Activated naive CD8-positive, alpha-beta T cell treated with anti-CD3 and anti-CD28 coated beads, Interleukin-2, amount 10 ng/mL, durations not matched to agents 7 days and 5 days (primary cell): ENCODE measurements at regions of chr22 and their contacts with region 1.

Region 1: DNA sequence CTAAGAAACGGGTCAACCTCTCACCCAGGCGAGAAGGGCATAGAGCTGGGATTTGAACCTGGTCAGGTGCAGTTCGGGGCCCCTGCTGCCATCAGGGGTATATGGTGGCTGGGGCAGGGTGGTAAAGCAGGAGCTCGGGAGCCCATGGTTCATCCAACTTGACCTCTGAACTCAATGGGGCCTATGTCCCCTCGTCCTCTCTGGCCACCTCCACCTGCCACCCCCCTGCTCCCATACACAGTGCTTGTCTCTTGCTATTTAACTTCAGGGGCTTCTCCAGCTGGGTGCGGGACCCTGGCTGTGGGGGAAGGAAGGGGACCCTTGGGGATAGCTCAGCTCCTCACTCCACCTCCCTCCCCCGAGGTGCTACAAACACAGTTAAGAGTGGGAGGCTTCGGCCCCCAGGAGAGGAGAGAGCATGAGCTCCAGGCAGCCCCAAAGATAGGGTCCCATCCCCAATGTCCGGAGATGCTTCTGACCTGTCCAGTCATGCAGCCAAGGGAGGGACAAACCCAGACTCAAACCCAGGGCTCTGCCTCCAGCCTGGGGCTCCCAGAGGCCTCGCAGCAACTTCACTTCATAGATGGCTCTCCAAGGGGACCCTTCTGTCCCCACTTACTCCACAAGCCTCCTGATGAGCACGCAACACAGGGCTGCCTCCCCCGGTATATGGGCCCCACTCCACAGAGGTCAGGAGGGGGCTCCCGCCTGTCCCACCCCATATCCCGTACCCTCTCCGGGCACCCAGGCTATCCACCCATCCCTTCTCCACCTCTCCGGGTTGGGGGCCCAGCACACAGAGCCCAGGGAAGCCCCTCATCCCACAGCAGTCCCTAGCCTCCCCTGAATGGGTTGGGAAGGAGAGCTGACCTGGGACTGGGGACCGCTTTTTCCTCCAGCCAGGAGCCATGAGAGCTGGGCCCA is 712 bp downstream of the IL2RB start:
- DNase-seq: no peak
- ATAC-seq: no peak
- H3K4me3 Mint-ChIP-seq: peak overlapping the region; percentile 95
- H3K27ac Mint-ChIP-seq: peak overlapping the region; percentile 95
- H3K4me1 Mint-ChIP-seq: peaks cover 48% of the 10 kb centered on the region
- H3K27me3 Mint-ChIP-seq: no peaks in the 10 kb centered on the region

Region 2: GRCh38 chr22:37077884-37078485 is 71.0 kb before region 1 on chr22:
- POLR2A ChIA-PET with region 1: interaction called, 57 read pairs
- DNase-seq: peak; percentile 94
- ATAC-seq: peak; percentile 17
- H3K4me3 Mint-ChIP-seq: peak overlapping the region; percentile 85
- H3K27ac Mint-ChIP-seq: peak overlapping the region; percentile 100
- H3K4me1 Mint-ChIP-seq: peaks cover 47% of the 10 kb centered on the region
- H3K27me3 Mint-ChIP-seq: no peaks in the 10 kb centered on the region

Region 3: GRCh38 chr22:37133304-37134018 is 15.5 kb before region 1 on chr22:
- POLR2A ChIA-PET with region 1: interaction called, 167 read pairs
- DNase-seq: no peak
- ATAC-seq: peak; percentile 22
- H3K4me3 Mint-ChIP-seq: no peak overlapping the region
- H3K27ac Mint-ChIP-seq: peak overlapping the region; percentile 64
- H3K4me1 Mint-ChIP-seq: peaks cover 26% of the 10 kb centered on the region
- H3K27me3 Mint-ChIP-seq: no peaks in the 10 kb centered on the region

Region 4: DNA sequence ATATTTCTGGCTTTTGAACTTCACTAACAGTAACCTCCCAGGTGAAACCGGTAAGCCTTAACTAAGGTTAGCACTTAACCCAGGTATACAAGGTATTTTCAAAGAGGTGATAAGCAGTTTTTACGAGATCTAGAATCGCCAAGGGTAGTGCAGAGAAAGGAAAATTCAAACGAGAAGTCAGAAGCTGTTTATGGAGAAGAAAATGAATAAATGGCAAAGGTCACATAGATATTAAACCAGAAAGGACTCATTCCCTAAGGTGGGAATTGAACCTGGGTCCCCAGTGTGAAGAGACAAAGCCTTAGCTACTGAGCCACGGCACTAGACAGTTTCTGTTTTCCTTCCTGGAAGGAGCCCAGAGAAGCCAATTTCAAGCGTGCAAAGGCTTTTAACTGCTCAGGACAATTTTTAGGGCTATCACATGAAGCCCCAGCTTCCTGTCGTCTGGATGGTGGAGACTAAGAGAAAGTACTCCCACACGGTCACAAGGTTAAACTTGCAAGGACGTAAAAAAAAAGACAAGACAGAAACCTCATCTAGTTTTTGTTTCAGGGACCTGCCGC is 44.7 kb after region 1 on chr22:
- POLR2A ChIA-PET with region 1: interaction called, 46 read pairs
- DNase-seq: peak; percentile 41
- ATAC-seq: peak; percentile 50
- H3K4me3 Mint-ChIP-seq: peak overlapping the region; percentile 59
- H3K27ac Mint-ChIP-seq: peak overlapping the region; percentile 79
- H3K4me1 Mint-ChIP-seq: peaks cover 36% of the 10 kb centered on the region
- H3K27me3 Mint-ChIP-seq: no peaks in the 10 kb centered on the region

Region 5: GRCh38 chr22:37218771-37219411 is 69.9 kb after region 1 on chr22:
- POLR2A ChIA-PET with region 1: interaction called, 12 read pairs
- DNase-seq: peak; percentile 64
- ATAC-seq: peak; percentile 70
- H3K4me3 Mint-ChIP-seq: peak overlapping the region; percentile 92
- H3K27ac Mint-ChIP-seq: peak overlapping the region; percentile 93
- H3K4me1 Mint-ChIP-seq: peaks cover 68% of the 10 kb centered on the region
- H3K27me3 Mint-ChIP-seq: no peaks in the 10 kb centered on the region